Endothelial cell of umbilical vein (primary cell): ENCODE measurements at regions of chr15 and their contacts with region 1.

Region 1: GRCh38 chr15:67150028-67150860 is 84.8 kb downstream of the SMAD3 start:
- DNase-seq: peak; percentile 99
- H3K4me3 ChIP-seq: peak overlapping the region in 2 of 3 experiments; percentile 5 to 30
- H3K27ac ChIP-seq: peak overlapping the region; percentile 100
- H3K4me1 ChIP-seq: peaks cover 53% of the 10 kb centered on the region
- H3K27me3 ChIP-seq: no peaks in the 10 kb centered on the region
- CTCF ChIP-seq: no peak
- POLR2A ChIP-seq: no peak

Region 2: DNA sequence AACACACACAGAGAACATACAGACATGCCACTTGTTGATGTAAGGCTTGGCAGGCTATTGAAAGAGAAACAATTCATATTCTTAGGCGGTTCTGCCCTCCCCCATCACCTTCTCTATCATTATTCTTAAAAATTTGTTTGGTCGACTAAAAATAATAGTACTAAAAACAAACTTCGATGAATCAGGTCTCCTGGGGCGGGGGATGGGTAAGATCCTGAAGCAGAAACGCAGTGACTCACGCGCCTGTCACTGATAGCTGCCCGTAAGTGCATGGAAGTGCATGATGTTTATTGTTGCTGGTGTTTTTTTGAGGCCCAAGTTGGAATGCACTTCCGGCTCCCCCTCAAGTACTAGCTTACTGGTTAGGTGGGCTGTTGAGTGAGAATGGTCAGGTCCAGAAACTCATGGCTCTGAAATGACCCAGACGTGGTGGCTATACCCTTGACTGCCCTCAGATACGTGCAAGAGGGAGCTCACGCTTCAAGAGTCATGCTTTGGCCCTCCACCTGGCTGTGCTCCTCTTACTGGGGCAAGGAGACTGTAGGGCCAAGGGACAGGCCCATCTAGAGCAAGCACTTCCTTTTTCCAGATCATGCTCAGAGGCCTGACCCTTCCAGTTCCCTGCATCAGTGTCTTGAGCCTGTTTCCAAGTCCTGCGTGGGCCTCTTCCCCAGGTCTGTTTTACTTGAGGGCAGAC is 73.9 kb before region 1 on chr15:
- CTCF ChIA-PET with region 1: interaction called, 3 read pairs
- POLR2A ChIA-PET with region 1: no interaction called
- dilution Hi-C with region 1: no loop called
- intact Hi-C with region 1: loop called (anchors 1 kb)
- DNase-seq: peak; percentile 95
- H3K4me3 ChIP-seq: no peak overlapping the region
- H3K27ac ChIP-seq: peak overlapping the region; percentile 76
- H3K4me1 ChIP-seq: peaks cover 72% of the 10 kb centered on the region
- H3K27me3 ChIP-seq: no peaks in the 10 kb centered on the region
- CTCF ChIP-seq: no peak
- POLR2A ChIP-seq: no peak

Region 3: DNA sequence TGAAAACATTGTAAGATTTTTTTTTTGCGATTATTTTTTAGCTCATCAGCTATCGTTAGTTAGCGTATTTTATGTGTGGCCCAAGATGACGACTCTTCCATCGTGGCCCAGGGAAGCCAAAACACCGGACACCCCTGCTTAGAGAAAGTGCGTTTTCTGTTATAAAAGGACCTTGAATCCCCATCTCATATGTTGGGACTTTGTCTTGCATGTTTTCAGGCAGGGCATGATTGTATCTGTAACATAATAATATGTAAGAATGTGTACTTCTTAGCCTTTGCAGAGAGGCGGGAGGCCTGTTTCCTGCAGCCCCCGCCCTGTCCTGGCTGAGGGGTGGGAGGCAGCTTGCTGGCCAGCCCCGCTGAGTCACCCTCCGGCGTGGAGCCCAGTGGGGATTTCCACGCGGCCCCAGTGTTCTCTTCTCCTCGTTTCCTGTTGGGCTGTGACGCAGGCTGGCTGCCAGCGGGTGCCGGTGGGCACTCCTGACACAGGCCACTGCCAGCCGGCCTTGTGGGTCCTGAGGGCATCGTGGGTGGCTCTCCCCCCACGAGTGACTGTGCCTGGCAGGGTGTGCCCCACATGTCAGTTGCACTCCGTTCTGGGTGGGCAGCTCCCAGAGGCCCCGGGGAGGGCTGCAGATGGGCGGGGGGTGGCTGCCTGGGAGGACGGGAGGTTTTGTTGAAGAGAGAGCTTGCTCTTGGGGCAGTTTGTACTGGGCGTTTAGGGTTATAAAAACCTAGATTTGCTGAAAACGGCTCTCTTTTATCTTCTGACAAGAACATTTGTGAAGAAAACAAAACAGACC is 29.2 kb before region 1 on chr15:
- CTCF ChIA-PET with region 1: interaction called, 6 read pairs
- POLR2A ChIA-PET with region 1: no interaction called
- dilution Hi-C with region 1: no loop called
- intact Hi-C with region 1: loop called (anchors 1 kb)
- DNase-seq: peak; percentile 98
- H3K4me3 ChIP-seq: no peak overlapping the region
- H3K27ac ChIP-seq: peak overlapping the region; percentile 92
- H3K4me1 ChIP-seq: peaks cover 82% of the 10 kb centered on the region
- H3K27me3 ChIP-seq: no peaks in the 10 kb centered on the region
- CTCF ChIP-seq: no peak
- POLR2A ChIP-seq: no peak

Region 4: GRCh38 chr15:67164811-67165253 is 14.6 kb after region 1 on chr15:
- CTCF ChIA-PET with region 1: interaction called, 5 read pairs
- POLR2A ChIA-PET with region 1: interaction called, 6 read pairs
- dilution Hi-C with region 1: no loop called
- intact Hi-C with region 1: loop called (anchors 1 kb)
- DNase-seq: no peak
- H3K4me3 ChIP-seq: no peak overlapping the region
- H3K27ac ChIP-seq: peak overlapping the region; percentile 83
- H3K4me1 ChIP-seq: peaks cover 51% of the 10 kb centered on the region
- H3K27me3 ChIP-seq: no peaks in the 10 kb centered on the region
- CTCF ChIP-seq: no peak
- POLR2A ChIP-seq: no peak

Region 5: GRCh38 chr15:67185621-67186225 is 35.5 kb after region 1 on chr15:
- CTCF ChIA-PET with region 1: no interaction called
- POLR2A ChIA-PET with region 1: no interaction called
- dilution Hi-C with region 1: no loop called
- intact Hi-C with region 1: no loop called
- DNase-seq: no peak
- H3K4me3 ChIP-seq: no peak overlapping the region
- H3K27ac ChIP-seq: no peak overlapping the region
- H3K4me1 ChIP-seq: no peaks in the 10 kb centered on the region
- H3K27me3 ChIP-seq: no peaks in the 10 kb centered on the region
- CTCF ChIP-seq: no peak
- POLR2A ChIP-seq: no peak

Region 6: GRCh38 chr15:67196672-67197363 is 46.6 kb after region 1 on chr15:
- CTCF ChIA-PET with region 1: no interaction called
- POLR2A ChIA-PET with region 1: no interaction called
- dilution Hi-C with region 1: no loop called
- intact Hi-C with region 1: loop called (anchors 1 kb)
- DNase-seq: peak; percentile 28
- H3K4me3 ChIP-seq: no peak overlapping the region
- H3K27ac ChIP-seq: no peak overlapping the region
- H3K4me1 ChIP-seq: peaks cover 20% of the 10 kb centered on the region
- H3K27me3 ChIP-seq: no peaks in the 10 kb centered on the region
- CTCF ChIP-seq: no peak
- POLR2A ChIP-seq: no peak

Region 7: DNA sequence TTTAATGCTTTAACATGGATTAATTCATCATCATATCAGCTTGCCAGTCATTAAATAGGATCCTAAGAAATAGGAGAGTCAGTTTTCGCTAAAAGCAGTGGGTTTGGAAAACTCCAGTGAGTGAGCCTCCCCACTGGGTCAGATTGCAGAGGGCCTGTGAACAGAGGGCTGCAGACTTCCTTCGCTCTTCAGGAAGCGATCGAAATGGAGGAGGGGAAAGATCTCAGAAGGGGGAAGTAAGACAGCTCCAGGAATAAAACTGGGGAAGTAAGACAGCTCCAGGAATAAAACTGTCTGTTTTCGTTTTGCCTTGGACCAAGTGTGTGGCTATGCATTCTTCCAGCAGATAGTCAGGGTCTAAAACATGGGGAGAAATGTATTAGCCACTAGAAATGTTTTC is 245.9 kb after region 1 on chr15:
- CTCF ChIA-PET with region 1: no interaction called
- POLR2A ChIA-PET with region 1: no interaction called
- dilution Hi-C with region 1: no loop called
- intact Hi-C with region 1: no loop called
- DNase-seq: no peak
- H3K4me3 ChIP-seq: no peak overlapping the region
- H3K27ac ChIP-seq: no peak overlapping the region
- H3K4me1 ChIP-seq: no peaks in the 10 kb centered on the region
- H3K27me3 ChIP-seq: peaks cover 0 to 2% of the 10 kb centered on the region in 2 experiments
- CTCF ChIP-seq: no peak
- POLR2A ChIP-seq: no peak